ENCODE measurements at regions of chr3 and their contacts with region 1.

Region 1: GRCh38 chr3:17233398-17233800 is 348.6 kb downstream of the PLCL2 start:
- DNase-seq: peak; percentile 51
- H3K4me3 Mint-ChIP-seq: no peak overlapping the region
- H3K27ac Mint-ChIP-seq: no peak overlapping the region
- H3K4me1 Mint-ChIP-seq: peaks cover 20% of the 10 kb centered on the region
- H3K27me3 Mint-ChIP-seq: no peaks in the 10 kb centered on the region

Region 2: GRCh38 chr3:16600780-16601539 is 632.4 kb before region 1 on chr3:
- CTCF ChIA-PET with region 1: interaction called, 10 read pairs
- intact Hi-C with region 1: loop called (anchors 1 kb)
- DNase-seq: peak; percentile 90
- H3K4me3 Mint-ChIP-seq: no peak overlapping the region
- H3K27ac Mint-ChIP-seq: no peak overlapping the region
- H3K4me1 Mint-ChIP-seq: peaks cover 19% of the 10 kb centered on the region
- H3K27me3 Mint-ChIP-seq: no peaks in the 10 kb centered on the region

Region 3: DNA sequence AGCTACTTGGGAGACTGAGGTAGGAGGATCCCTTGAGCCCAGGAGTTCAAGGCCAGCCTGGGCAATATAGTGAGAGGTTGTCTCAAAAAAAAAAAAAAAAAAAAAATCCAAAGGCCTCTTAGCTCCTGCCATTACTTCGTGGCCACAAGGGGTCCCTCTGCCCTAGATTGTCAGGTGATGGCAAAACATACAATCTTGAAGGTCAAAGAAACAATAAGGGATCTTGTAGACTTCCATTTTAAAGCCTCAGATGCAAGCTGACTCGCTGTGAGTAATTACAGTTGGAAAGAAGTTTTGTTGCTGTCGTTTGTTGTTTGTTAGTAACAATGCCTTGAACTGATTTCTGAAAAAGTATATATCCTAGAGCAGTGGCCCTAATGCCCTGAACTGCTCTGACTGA is 404.6 kb before region 1 on chr3:
- CTCF ChIA-PET with region 1: interaction called, 5 read pairs
- intact Hi-C with region 1: loop called (anchors 1 kb)
- DNase-seq: peak; percentile 75
- H3K4me3 Mint-ChIP-seq: no peak overlapping the region
- H3K27ac Mint-ChIP-seq: no peak overlapping the region
- H3K4me1 Mint-ChIP-seq: peaks cover 18% of the 10 kb centered on the region
- H3K27me3 Mint-ChIP-seq: no peaks in the 10 kb centered on the region

Region 4: DNA sequence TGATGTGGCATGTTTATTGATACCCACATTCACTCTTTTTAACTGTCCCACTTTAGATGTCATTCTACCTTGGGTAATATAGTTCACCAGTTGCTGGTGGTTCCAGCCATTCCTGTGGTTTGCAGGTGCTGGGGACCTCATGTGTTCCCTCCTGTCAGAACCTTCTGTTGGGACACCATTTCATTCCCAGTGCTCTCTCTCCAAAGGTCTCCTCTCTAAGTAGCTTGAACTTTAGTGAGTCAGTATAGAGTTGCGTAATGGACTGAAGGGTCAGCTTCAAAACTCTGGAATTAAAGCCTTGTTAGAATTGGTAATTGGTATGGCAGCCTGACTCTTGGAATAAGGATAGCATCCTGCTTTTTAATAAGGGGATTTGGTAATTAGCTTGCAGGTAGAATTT is 240.2 kb before region 1 on chr3:
- CTCF ChIA-PET with region 1: no interaction called
- intact Hi-C with region 1: loop called (anchors 5 kb)
- DNase-seq: no peak
- H3K4me3 Mint-ChIP-seq: no peak overlapping the region
- H3K27ac Mint-ChIP-seq: no peak overlapping the region
- H3K4me1 Mint-ChIP-seq: peaks cover 77% of the 10 kb centered on the region
- H3K27me3 Mint-ChIP-seq: no peaks in the 10 kb centered on the region

Region 5: DNA sequence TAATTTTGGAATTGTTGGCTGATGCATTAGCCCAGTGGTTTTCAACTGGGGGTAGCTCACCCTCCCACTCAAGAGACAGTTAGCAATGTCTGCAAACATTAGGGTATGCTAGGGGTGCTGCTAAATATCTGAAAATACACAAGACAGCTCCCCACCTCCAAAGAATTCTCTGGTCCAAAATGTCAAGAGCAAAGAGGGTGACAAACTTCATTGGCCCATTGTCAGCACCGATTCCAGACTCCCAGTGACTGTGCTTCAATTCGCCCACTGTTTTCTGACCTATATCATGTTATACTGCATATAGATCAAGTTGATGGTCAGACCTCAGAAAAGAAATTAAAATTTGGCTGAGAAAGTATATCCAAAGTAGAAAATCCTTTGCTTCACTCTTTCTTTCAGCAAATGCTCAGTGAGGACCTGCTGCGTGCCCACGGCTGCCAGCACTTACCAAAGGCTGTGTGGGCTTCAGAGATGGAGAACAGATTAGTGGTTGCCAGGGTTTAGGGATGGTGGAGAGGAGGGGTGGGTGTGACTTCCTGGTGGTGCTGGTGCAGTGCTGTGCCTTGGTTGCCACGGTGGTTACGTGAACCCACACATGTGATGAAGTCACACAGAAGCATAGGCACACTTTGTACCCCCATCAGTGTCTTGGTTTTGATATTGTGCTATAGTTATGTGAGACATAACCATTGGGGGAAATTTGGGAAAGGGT is 144.6 kb before region 1 on chr3:
- CTCF ChIA-PET with region 1: no interaction called
- intact Hi-C with region 1: no loop called
- DNase-seq: no peak
- H3K4me3 Mint-ChIP-seq: no peak overlapping the region
- H3K27ac Mint-ChIP-seq: no peak overlapping the region
- H3K4me1 Mint-ChIP-seq: peaks cover 31% of the 10 kb centered on the region
- H3K27me3 Mint-ChIP-seq: no peaks in the 10 kb centered on the region

Region 6: DNA sequence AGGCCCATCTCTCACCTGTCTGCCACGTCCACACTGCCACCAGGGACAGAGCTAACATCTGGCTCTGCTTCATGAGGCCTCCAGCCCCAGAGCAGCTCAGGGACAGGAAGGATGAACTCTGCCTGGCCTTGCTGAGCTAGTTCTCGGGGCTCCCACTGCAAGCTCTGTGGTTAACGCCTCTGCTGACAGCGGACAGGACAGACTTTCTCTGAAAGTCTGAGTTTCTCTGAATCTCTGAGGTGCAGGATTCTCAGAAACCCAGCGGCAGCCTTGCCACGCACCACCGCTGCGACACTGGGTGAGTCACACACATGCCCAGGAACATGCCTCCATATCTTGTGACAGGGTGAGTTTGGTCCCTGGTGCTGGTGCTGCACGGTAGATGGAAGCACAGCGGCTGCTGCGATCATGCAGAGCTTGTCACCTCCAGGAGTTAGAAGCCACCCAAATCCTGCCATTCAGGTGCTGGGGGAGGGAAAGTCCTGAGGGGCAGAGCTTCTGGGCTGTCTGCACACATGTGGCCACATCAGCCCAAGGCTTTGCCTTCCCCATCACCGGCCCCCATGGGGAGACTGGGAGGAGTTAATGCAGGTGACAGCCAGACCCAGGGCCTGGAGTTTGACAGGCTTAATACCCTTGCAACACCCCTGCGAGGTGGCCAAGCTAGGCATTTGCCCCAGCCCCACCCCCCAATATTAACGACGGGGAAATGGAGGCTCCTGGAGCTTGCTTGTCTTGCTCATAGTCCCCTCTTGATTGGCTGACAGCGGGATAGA is 81.6 kb before region 1 on chr3:
- CTCF ChIA-PET with region 1: interaction called, 3 read pairs
- intact Hi-C with region 1: loop called (anchors 2 kb)
- DNase-seq: peak; percentile 95
- H3K4me3 Mint-ChIP-seq: peak overlapping the region; percentile 28
- H3K27ac Mint-ChIP-seq: peak overlapping the region; percentile 85
- H3K4me1 Mint-ChIP-seq: peaks cover 25% of the 10 kb centered on the region
- H3K27me3 Mint-ChIP-seq: no peaks in the 10 kb centered on the region